ENCODE measurements at regions of chr5 and their contacts with region 1.

Region 1: GRCh38 chr5:146208916-146209522 is 5.6 kb downstream of the RBM27 start:
- DNase-seq: peak; percentile 78
- ATAC-seq: peak; percentile 78
- H3K4me3 ChIP-seq: no peak overlapping the region
- H3K27ac ChIP-seq: peak overlapping the region; percentile 82
- H3K4me1 ChIP-seq: peaks cover 25% of the 10 kb centered on the region
- H3K27me3 ChIP-seq: no peaks in the 10 kb centered on the region
- CTCF ChIP-seq: peak; percentile 44

Region 2: DNA sequence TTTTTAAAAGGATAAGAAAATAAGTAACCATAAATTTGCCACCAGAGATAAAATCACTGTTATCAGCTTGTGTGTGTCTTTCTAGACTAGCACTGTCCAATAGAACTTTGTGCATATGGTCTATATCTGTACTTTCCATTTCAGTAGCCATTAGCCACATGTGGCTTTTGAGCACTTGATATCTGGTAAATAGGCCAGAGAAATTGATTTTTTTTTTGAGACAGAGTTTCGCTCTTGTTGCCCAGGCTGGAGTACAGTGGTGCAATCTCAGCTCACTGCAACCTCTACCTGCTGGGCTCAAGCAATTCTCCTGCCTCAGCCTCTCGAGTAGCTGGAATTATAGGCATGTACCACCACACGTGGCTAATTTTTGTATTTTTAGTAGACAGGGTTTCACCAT is 12.2 kb after region 1 on chr5:
- CTCF ChIA-PET with region 1: interaction called, 4 read pairs
- POLR2A ChIA-PET with region 1: no interaction called
- intact Hi-C with region 1: loop called (anchors 2 kb)
- DNase-seq: no peak
- ATAC-seq: no peak
- H3K4me3 ChIP-seq: no peak overlapping the region
- H3K27ac ChIP-seq: no peak overlapping the region
- H3K4me1 ChIP-seq: no peaks in the 10 kb centered on the region
- H3K27me3 ChIP-seq: no peaks in the 10 kb centered on the region
- CTCF ChIP-seq: no peak

Region 3: DNA sequence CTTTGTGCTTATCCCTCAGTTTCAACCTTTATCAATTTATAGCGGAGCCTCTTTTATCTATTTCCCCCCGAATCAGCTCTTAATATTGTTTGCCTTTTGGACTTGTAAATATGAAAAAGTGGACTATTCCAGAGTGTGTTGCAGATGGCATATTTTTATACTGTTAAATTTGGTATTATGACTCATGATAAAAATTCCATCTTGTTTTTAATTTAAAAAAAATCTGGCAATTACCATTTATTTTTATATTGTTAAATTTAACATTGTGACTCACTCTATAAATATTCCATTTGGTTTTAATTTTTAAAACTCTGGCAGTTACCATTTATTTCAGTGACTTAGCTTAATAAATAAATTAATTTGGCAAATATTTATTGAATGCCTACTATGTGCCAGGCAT is 31.9 kb after region 1 on chr5:
- CTCF ChIA-PET with region 1: no interaction called
- POLR2A ChIA-PET with region 1: no interaction called
- intact Hi-C with region 1: loop called (anchors 1 kb)
- DNase-seq: peak; percentile 22
- ATAC-seq: peak; percentile 86
- H3K4me3 ChIP-seq: no peak overlapping the region
- H3K27ac ChIP-seq: no peak overlapping the region
- H3K4me1 ChIP-seq: no peaks in the 10 kb centered on the region
- H3K27me3 ChIP-seq: no peaks in the 10 kb centered on the region
- CTCF ChIP-seq: no peak